ENCODE measurements at regions of chr1 and their contacts with region 1.

Region 1: GRCh38 chr1:234564642-234565037 is 45.3 kb downstream of the IRF2BP2 start:
- DNase-seq: no peak

Region 2: DNA sequence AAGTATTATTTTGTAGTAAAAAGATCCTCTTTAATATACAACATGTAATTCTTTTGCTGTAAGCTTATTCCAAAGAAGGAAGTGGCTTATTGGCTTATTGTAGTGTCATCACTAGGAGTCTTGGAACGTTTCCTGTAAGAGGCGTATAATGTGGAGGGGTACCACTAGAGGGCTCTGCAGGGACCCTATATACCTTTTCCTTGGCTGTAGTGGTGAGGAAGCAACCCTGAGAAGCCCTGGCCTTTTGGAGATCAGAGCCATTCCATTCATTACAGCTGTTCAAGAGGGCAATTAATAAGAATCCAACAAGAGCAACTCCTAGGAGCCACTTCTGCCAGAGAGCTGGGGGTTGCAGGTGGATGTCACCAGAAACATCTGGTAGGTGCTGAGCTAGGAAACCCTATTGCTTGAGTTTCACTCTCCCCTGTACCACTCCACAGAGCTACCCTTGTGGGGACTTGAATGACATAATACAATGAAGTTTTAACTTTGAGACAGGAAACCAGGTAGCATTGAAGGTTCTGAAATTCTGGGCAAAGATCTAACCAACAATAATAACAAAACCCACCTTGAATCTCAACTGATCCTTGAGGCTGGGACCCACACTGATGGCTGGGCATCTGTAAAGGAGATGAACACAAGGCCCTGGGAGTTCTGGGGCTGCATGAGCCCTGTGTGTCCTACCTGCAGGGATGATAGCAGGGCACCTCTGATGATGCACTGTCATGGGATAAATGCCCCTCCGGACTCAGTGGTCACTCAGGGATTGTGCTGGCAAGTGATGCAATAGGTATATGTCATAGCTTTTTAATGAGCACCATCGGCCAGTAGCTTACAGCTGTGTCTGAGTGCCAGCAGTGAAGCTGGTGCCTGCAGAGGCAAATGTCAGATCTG is 351.6 kb before region 1 on chr1:
- intact Hi-C with region 1: no loop called
- DNase-seq: no peak

Region 3: DNA sequence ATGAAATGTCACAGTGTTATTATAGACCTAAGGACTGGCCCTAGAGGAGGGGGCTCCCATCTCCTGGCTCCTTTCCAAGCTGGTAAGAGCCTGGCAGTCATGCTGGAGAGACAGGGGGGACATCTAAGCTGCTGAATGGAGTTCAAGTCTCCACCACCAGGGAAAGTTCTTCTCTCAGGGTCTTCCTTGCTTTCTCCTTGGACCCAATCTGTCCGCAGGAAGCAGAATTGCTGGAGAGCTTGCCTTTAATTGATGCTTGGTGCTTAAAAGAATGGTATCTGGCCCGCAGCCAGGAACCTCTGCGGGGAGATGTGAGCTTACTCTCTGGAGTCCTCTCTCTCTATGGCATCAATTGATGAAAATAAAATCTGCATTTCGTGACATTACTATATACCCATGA is 20.3 kb after region 1 on chr1:
- intact Hi-C with region 1: loop called (anchors 1 kb)
- DNase-seq: no peak